Heart right ventricle (tissue), 16 donors: ENCODE measurements at regions of chr9 and their contacts with region 1.

Region 1: GRCh38 chr9:85445887-85446286 is 295.9 kb downstream of the AGTPBP1 start:
- DNase-seq: no peak
- ATAC-seq: no peak
- H3K4me3 ChIP-seq: no peak overlapping the region
- H3K27ac ChIP-seq: no peak overlapping the region
- H3K4me1 ChIP-seq: no peaks in the 10 kb centered on the region
- H3K27me3 ChIP-seq: no peaks in the 10 kb centered on the region
- CTCF ChIP-seq: no peak

Region 2: GRCh38 chr9:84478996-84479395 is 966.9 kb before region 1 on chr9:
- intact Hi-C with region 1: loop called in 1 of 10 experiments (anchors 5 kb)
- DNase-seq: no peak
- ATAC-seq: no peak
- H3K4me3 ChIP-seq: no peak overlapping the region
- H3K27ac ChIP-seq: no peak overlapping the region
- H3K4me1 ChIP-seq: peaks cover 0 to 14% (median 4%) of the 10 kb centered on the region in 9 donors
- H3K27me3 ChIP-seq: no peaks in the 10 kb centered on the region
- CTCF ChIP-seq: no peak

Region 3: GRCh38 chr9:85137696-85138095 is 308.2 kb before region 1 on chr9:
- intact Hi-C with region 1: no loop called
- DNase-seq: no peak
- ATAC-seq: no peak
- H3K4me3 ChIP-seq: no peak overlapping the region
- H3K27ac ChIP-seq: no peak overlapping the region
- H3K4me1 ChIP-seq: no peaks in the 10 kb centered on the region
- H3K27me3 ChIP-seq: no peaks in the 10 kb centered on the region
- CTCF ChIP-seq: no peak